Caco-2 (cell line): ENCODE measurements at regions of chr13 and their contacts with region 1.

Region 1: GRCh38 chr13:87280139-87280538 is 391.0 kb upstream of the SLITRK5 start:
- DNase-seq: no peak
- H3K4me3 ChIP-seq: no peak overlapping the region
- H3K4me3 Mint-ChIP-seq: no peak overlapping the region
- H3K27ac Mint-ChIP-seq: no peak overlapping the region
- H3K4me1 ChIP-seq: no peaks in the 10 kb centered on the region
- H3K4me1 Mint-ChIP-seq: no peaks in the 10 kb centered on the region
- H3K27me3 ChIP-seq: no peaks in the 10 kb centered on the region
- H3K27me3 Mint-ChIP-seq: peaks cover 4% of the 10 kb centered on the region
- CTCF ChIP-seq: peak; percentile 14 to 36

Region 2: GRCh38 chr13:87376081-87376480 is 95.9 kb after region 1 on chr13:
- CTCF ChIA-PET with region 1: no interaction called
- POLR2A ChIA-PET with region 1: no interaction called
- intact Hi-C with region 1: no loop called
- DNase-seq: no peak
- H3K4me3 ChIP-seq: no peak overlapping the region
- H3K4me3 Mint-ChIP-seq: no peak overlapping the region
- H3K27ac Mint-ChIP-seq: no peak overlapping the region
- H3K4me1 ChIP-seq: no peaks in the 10 kb centered on the region
- H3K4me1 Mint-ChIP-seq: no peaks in the 10 kb centered on the region
- H3K27me3 ChIP-seq: no peaks in the 10 kb centered on the region
- H3K27me3 Mint-ChIP-seq: no peaks in the 10 kb centered on the region
- CTCF ChIP-seq: no peak

Region 3: GRCh38 chr13:87777395-87777794 is 497.3 kb after region 1 on chr13:
- CTCF ChIA-PET with region 1: no interaction called
- POLR2A ChIA-PET with region 1: no interaction called
- intact Hi-C with region 1: loop called (anchors 5 kb)
- DNase-seq: peak in 1 of 2 experiments; percentile 4
- H3K4me3 ChIP-seq: no peak overlapping the region
- H3K4me3 Mint-ChIP-seq: no peak overlapping the region
- H3K27ac Mint-ChIP-seq: no peak overlapping the region
- H3K4me1 ChIP-seq: no peaks in the 10 kb centered on the region
- H3K4me1 Mint-ChIP-seq: peaks cover 6% of the 10 kb centered on the region
- H3K27me3 ChIP-seq: no peaks in the 10 kb centered on the region
- H3K27me3 Mint-ChIP-seq: no peaks in the 10 kb centered on the region
- CTCF ChIP-seq: no peak